Ovary (tissue), 10 donors: ENCODE measurements at regions of chr9 and their contacts with region 1.

Region 1: GRCh38 chr9:97468658-97469448 is 32.6 kb upstream of the TMOD1 start:
- DNase-seq: peak; percentile 77 to 86 (median 80)
- H3K4me3 ChIP-seq: no peak overlapping the region
- H3K27ac ChIP-seq: peak overlapping the region in 1 of 2 donors; percentile 16
- H3K4me1 ChIP-seq: no peaks in the 10 kb centered on the region
- H3K27me3 ChIP-seq: no peaks in the 10 kb centered on the region
- CTCF ChIP-seq: peak; percentile 65 to 95 (median 86)
- EP300 ChIP-seq: no peak
- POLR2A ChIP-seq: no peak

Region 2: DNA sequence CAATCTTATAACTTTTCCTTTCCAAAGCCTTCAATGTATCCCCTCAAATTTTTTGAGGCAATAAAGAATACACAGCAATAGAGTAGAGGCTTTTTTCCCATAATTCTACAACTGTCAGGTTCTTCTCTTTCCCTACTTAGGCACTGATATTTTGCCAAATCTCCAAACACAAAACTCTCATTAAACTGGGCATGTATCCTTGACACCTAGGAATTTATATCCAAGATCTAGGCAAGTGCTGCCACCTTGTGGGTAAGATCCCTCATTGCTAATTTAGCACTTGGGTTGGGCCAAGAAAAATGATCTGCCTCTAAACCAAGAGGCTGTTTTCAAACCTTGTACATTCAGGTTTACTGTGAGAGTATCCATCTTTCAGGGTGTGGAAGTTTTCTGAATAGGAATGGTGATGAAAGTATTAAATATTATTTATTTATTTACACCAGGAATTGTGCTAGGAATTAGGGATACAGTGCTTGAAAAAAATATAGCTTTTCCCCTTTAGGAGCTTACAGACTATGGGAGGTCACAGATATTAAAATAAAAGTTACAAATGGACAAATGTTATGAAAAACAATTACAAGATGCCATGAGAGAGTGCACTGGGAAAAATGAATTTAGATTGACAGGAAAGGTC is 146.7 kb after region 1 on chr9:
- intact Hi-C with region 1: loop called (anchors 1 to 5 kb)
- DNase-seq: peak in 4 of 5 donors; percentile 36 to 79 (median 56)
- H3K4me3 ChIP-seq: no peak overlapping the region
- H3K27ac ChIP-seq: peak overlapping the region in 1 of 2 donors; percentile 12
- H3K4me1 ChIP-seq: no peaks in the 10 kb centered on the region
- H3K27me3 ChIP-seq: no peaks in the 10 kb centered on the region
- CTCF ChIP-seq: peak; percentile 81 to 88 (median 88)
- EP300 ChIP-seq: no peak
- POLR2A ChIP-seq: no peak